HCT116 (cell line): ENCODE measurements at regions of chr5 and their contacts with region 1.

Region 1: DNA sequence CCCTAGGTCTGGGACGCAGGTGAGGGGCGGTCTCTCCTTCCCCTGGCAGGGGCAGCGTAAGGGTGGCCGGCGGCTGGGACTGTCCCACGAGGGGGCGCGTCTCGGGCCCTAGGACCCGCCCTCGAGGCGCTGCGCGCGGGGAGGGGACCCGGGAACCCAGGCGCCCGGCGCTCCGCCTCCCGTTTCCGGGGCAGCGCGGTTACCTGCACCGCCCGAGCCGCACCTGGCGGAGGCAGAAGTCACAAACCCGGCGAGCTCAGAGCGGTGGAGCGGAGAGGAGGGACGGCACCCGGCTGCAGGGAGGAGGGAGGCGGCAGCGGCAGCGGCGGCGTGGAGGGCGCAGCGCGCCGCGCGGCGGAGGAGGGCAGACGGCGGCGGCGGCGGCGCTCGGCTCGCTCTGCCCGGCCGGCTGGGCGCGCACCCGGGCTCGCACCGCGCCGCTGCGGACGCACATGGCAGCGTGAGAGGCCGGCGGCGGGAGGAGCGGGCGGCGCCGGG is at the start of gene WWC1:
- DNase-seq: peak; percentile 79
- ATAC-seq: peak; percentile 88
- H3K4me3 ChIP-seq: peak within 1 kb of the TSS; percentile 47 to 70
- H3K27ac ChIP-seq: peak within 1 kb of the TSS; percentile 80
- H3K4me1 ChIP-seq: peaks cover 51 to 77% of the 10 kb centered on the region in 2 experiments
- H3K27me3 ChIP-seq: no peaks in the 10 kb centered on the region
- CTCF ChIP-seq: peak in 2 of 3 experiments; percentile 13 to 26; a peak in 2 of 6 replicates
- POLR2A ChIP-seq: peak; percentile 52
- RAD21 ChIP-seq: no peak
- total RNA-seq, gene WWC1: 52.6 TPM

Region 2: GRCh38 chr5:168147568-168148360 is 143.7 kb before region 1 on chr5:
- CTCF ChIA-PET with region 1: no interaction called
- POLR2A ChIA-PET with region 1: no interaction called
- RAD21 ChIA-PET with region 1: no interaction called
- intact Hi-C with region 1: no loop called
- DNase-seq: no peak
- ATAC-seq: no peak
- H3K4me3 ChIP-seq: no peak overlapping the region
- H3K27ac ChIP-seq: no peak overlapping the region
- H3K4me1 ChIP-seq: no peaks in the 10 kb centered on the region
- H3K27me3 ChIP-seq: peaks cover 60% of the 10 kb centered on the region
- CTCF ChIP-seq: no peak
- POLR2A ChIP-seq: no peak
- RAD21 ChIP-seq: no peak

Region 3: DNA sequence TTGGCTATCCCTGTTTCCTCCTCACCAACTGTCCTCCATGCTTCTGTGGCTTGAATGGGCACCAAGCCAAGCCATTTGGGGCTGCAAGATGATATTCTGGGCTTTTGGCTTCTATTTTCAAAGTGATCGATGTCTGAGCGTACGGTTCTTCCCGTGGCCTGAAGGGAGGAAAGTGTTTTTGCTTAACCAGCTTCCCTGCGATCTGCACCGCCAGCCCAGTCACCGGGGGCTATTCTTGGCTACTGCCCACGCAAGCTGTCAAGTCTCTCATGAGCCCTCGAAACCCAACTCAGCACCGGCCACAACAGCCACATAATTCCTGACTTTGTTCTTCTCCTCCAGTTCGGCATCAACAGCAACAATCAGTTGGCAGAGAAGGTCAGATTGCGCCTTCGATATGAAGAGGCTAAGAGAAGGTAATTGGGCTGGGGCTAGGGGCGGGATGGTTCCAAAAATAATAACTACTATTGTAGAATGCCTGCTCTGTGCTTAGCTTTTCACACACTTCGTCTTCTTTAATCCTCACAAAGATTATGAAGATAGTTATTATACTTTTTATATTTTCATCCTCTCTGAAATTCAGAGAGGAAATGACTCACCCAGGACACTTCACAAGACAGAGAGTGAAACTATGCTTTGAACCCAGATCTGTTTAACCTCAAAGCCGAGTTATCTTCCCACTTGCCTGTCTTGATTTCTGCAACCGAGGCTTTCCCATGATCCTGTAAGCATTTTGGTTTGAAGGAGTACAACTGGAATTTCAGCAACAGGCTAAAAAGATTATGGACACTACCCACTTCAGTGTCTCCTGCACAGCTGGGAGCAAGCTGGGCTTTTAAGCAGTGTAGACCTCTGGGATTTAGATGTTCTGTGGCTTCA is 118.3 kb after region 1 on chr5:
- CTCF ChIA-PET with region 1: no interaction called
- POLR2A ChIA-PET with region 1: no interaction called
- RAD21 ChIA-PET with region 1: no interaction called
- intact Hi-C with region 1: loop called (anchors 5 kb)
- DNase-seq: peak; percentile 81
- ATAC-seq: peak; percentile 71
- H3K4me3 ChIP-seq: peak overlapping the region in 1 of 2 experiments; percentile 42; a peak in 3 of 4 replicates
- H3K27ac ChIP-seq: peak overlapping the region; percentile 80
- H3K4me1 ChIP-seq: peaks cover 55 to 72% of the 10 kb centered on the region in 2 experiments
- H3K27me3 ChIP-seq: no peaks in the 10 kb centered on the region
- CTCF ChIP-seq: no peak
- POLR2A ChIP-seq: no peak
- RAD21 ChIP-seq: 0 out of 2 replicates have a peak, but pooled peaks have one; percentile 26

Region 4: GRCh38 chr5:168486136-168486879 is 194.8 kb after region 1 on chr5 and contains the start of gene RARS1:
- CTCF ChIA-PET with region 1: no interaction called
- POLR2A ChIA-PET with region 1: no interaction called
- RAD21 ChIA-PET with region 1: no interaction called
- intact Hi-C with region 1: loop called (anchors 5 kb)
- DNase-seq: peak; percentile 85
- ATAC-seq: peak; percentile 91
- H3K4me3 ChIP-seq: peak within 1 kb of the TSS; percentile 96 to 100
- H3K27ac ChIP-seq: peak within 1 kb of the TSS; percentile 61
- H3K4me1 ChIP-seq: peaks cover 5 to 10% of the 10 kb centered on the region in 2 experiments; a peak in 3 of 4 replicates
- H3K27me3 ChIP-seq: no peaks in the 10 kb centered on the region
- CTCF ChIP-seq: peak; percentile 60 to 98 (median 94); a peak in 5 of 6 replicates
- POLR2A ChIP-seq: peak; percentile 81
- RAD21 ChIP-seq: peak; percentile 66
- total RNA-seq, gene RARS1: 122 TPM